Esophagus muscularis mucosa (tissue), 4 donors: ENCODE measurements at regions of chr3 and their contacts with region 1.

Region 1: DNA sequence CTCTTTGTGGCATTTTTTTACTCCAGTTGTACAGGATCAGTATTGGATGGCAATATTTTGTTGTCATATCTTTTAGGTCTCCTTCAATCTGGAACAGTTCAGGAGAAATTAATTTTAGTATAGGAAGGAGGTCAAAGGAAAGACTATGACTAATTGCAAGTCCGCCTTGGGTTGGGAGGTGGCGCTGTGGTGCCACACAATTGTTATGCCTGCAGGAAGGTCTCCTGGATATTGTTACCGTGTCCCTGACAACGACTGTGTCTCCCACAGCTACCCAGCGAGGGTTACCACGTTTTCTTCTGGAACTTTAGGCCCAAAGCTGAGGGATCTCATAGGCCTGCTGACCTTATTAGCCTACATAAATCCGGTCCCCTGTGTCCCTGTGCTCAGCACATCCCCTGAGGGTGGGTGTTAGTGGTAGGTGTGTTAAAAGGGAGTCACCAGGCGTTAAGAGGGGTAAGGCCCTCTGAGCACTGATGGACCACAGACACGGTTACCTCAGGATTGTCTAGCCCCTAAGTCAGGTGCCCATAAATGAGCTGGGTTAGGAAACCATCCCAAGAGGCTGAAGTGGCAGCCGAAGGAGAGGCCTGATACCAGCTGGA is 31.5 kb downstream of the KCNAB1 start:
- DNase-seq: peak; percentile 91
- H3K4me3 ChIP-seq: no peak overlapping the region
- H3K27ac ChIP-seq: peak overlapping the region in 1 of 4 donors; percentile 65
- H3K4me1 ChIP-seq: peaks cover 22 to 46% (median 40%) of the 10 kb centered on the region in 4 donors
- H3K27me3 ChIP-seq: no peaks in the 10 kb centered on the region
- CTCF ChIP-seq: peak; percentile 68 to 81 (median 79)
- EP300 ChIP-seq: no peak
- POLR2A ChIP-seq: no peak

Region 2: DNA sequence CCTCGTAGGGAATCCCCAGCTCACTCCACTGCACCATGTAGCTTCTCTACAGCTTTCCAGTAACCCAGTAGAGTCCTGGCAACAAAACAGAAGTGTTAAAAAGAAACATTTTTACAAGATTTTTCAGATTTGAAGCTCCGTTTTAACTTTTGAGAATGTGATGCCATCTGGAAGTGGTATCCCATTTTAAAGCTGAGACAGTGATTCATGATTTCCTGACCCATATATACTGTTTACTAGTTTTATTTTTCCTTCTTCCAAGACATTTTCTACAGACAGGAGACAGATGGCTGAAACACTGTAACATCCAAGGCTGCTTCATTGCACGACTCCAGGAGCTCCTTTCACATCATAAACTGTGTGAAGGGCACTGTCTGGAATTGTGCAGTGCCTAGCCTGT is 61.8 kb before region 1 on chr3:
- intact Hi-C with region 1: no loop called
- DNase-seq: no peak
- H3K4me3 ChIP-seq: no peak overlapping the region
- H3K27ac ChIP-seq: no peak overlapping the region
- H3K4me1 ChIP-seq: no peaks in the 10 kb centered on the region
- H3K27me3 ChIP-seq: no peaks in the 10 kb centered on the region
- CTCF ChIP-seq: no peak
- EP300 ChIP-seq: no peak
- POLR2A ChIP-seq: no peak

Region 3: DNA sequence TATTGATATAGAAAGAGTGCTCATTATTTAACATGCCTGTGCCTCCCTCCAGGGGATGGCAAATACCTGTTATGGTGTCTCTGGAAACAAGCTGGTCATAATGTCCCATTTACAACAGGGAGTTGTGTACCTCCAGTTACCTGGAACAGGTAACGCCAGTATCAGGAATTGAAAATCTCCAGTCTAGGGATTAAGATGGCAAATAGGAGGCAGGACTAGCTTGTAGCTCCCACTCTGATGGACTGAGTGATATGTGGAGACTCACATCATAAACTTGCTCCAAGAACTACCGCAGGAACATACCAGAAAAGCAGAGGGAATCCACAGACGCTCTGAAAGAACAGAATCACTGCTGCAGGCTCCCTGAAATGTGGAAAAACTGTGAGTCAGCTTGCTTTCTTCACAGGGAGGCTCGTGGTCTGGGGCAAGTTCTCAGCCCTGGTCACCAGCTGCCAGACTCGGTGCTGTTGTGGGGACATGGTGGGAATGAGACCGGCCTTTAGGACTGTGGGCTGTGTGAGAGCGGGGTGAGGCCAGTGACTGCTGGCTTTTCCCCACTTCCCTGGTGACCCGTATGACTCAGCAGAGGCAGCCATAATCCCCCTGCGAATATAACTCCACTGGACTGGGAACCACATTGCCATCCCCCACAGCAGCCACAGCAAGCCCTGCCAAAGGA is 65.9 kb after region 1 on chr3:
- intact Hi-C with region 1: no loop called
- DNase-seq: no peak
- H3K4me3 ChIP-seq: no peak overlapping the region
- H3K27ac ChIP-seq: no peak overlapping the region
- H3K4me1 ChIP-seq: no peaks in the 10 kb centered on the region
- H3K27me3 ChIP-seq: no peaks in the 10 kb centered on the region
- CTCF ChIP-seq: no peak
- EP300 ChIP-seq: no peak
- POLR2A ChIP-seq: no peak

Region 4: GRCh38 chr3:156307704-156308103 is 155.8 kb after region 1 on chr3:
- intact Hi-C with region 1: no loop called
- DNase-seq: no peak
- H3K4me3 ChIP-seq: no peak overlapping the region
- H3K27ac ChIP-seq: peak overlapping the region in 2 of 4 donors; percentile 11 to 16
- H3K4me1 ChIP-seq: peaks cover 0 to 31% (median 31%) of the 10 kb centered on the region in 4 donors
- H3K27me3 ChIP-seq: no peaks in the 10 kb centered on the region
- CTCF ChIP-seq: no peak
- EP300 ChIP-seq: no peak
- POLR2A ChIP-seq: no peak

Region 5: GRCh38 chr3:156509189-156510174 is 357.6 kb after region 1 on chr3:
- intact Hi-C with region 1: loop called (anchors 2 kb)
- DNase-seq: no peak
- H3K4me3 ChIP-seq: no peak overlapping the region
- H3K27ac ChIP-seq: no peak overlapping the region
- H3K4me1 ChIP-seq: peaks cover 0 to 14% (median 6%) of the 10 kb centered on the region in 4 donors
- H3K27me3 ChIP-seq: no peaks in the 10 kb centered on the region
- CTCF ChIP-seq: peak; percentile 64 to 66 (median 65)
- EP300 ChIP-seq: no peak
- POLR2A ChIP-seq: no peak

Region 6: DNA sequence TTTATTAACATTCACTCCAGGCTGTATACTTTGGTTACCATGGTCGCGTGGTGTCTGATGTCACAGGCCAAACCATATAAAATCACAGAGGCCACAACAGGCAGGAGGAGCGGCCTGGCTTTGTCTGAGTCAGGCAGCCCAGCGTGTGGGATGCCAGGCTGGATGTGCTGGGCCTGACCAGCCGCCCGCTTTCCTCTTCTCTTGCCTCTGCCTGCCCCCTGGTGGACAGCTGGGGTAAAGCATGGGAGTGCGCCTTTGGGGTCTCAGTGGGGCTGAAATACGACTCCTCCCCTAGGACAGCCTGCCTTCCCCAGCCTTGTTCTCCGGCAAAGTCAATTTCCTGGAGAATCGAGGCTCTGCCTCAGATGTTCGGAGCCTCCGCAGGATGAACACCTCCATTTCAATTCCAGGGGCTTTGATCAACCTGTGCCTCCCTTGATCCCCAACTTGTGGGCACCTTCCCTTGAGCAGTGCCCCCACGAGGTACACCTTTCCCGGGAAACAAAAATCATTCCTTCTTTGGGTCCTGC is 929.8 kb after region 1 on chr3:
- intact Hi-C with region 1: loop called (anchors 2 kb)
- DNase-seq: peak; percentile 95
- H3K4me3 ChIP-seq: peak overlapping the region in 1 of 4 donors; percentile 4
- H3K27ac ChIP-seq: peak overlapping the region in 3 of 4 donors; percentile 8 to 42 (median 36)
- H3K4me1 ChIP-seq: peaks cover 8 to 29% (median 24%) of the 10 kb centered on the region in 4 donors
- H3K27me3 ChIP-seq: no peaks in the 10 kb centered on the region
- CTCF ChIP-seq: peak in 2 of 3 experiments; percentile 96 to 97
- EP300 ChIP-seq: no peak
- POLR2A ChIP-seq: no peak

Region 7: DNA sequence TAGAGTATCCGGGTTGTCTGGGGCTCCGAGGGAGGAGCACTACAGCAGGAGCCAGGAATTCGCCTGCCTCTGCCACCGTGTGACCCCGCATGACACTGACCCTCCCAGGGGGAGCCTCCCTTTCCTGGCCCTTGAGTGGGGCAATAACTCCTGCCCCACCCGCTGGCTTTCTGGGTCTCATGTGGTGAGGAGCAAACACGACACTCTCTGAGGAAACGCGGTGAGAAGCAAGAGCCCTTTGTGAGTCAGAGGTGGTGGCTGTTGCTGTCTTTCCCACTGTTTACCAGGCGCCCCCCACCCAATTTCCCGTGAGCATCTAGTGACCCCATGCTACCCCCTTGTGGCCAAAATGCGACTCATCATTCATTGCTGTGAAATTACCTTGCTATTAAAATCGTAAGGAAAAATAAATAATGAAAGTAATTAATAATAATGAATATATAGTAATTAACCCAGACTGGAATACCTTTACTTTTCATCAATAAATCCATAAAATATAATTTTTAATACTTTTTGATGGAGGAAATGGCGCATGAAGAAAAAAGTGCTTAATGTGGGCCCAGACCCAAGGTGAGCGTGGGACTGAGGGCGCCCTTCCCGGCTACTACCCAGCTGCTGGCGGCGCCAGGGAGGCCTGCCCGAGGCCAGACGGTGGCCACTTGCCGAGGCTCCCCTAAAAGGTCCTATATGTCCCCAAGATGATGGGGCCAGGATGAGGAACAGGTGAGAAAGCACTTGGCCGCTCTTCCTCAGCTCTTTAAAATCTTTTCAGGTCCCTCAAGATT is 978.7 kb after region 1 on chr3:
- intact Hi-C with region 1: loop called (anchors 5 kb)
- DNase-seq: no peak
- H3K4me3 ChIP-seq: peak overlapping the region; percentile 18 to 36 (median 34)
- H3K27ac ChIP-seq: peak overlapping the region; percentile 64 to 74 (median 72)
- H3K4me1 ChIP-seq: peaks cover 44 to 60% (median 54%) of the 10 kb centered on the region in 4 donors
- H3K27me3 ChIP-seq: no peaks in the 10 kb centered on the region
- CTCF ChIP-seq: peak; percentile 58 to 63 (median 59)
- EP300 ChIP-seq: no peak
- POLR2A ChIP-seq: no peak